ENCODE measurements at regions of chr5 and their contacts with region 1.

Region 1: DNA sequence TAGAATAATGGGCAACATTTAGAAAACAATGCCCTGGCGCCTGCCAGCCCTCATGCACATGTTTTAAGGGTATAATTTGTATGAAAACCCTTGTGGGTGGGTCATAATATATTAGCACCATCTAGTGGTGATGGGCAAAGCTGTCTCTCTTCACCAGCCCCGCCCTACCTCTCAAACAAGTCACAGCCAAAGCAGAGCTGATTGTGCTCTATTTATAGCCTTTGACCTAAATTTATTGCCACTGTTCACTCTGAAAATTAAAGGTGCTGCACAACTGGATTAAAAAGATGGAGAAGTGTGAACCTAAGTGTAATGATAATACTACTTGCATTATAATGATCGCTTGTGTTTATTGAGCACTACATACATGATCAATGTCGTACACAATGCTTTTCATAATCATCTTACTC is 131.9 kb upstream of the ANKH start:
- DNase-seq: peak; percentile 23 to 84
- ATAC-seq: peak; percentile 89 to 99 (median 98)
- H3K4me3 ChIP-seq: no peak overlapping the region
- H3K4me3 Mint-ChIP-seq: no peak overlapping the region
- H3K27ac ChIP-seq: no peak overlapping the region
- H3K27ac Mint-ChIP-seq: no peak overlapping the region
- H3K4me1 ChIP-seq: no peaks in the 10 kb centered on the region
- H3K4me1 Mint-ChIP-seq: peaks cover 0 to 2% of the 10 kb centered on the region in 2 donors
- H3K27me3 ChIP-seq: no peaks in the 10 kb centered on the region
- H3K27me3 Mint-ChIP-seq: peaks cover 29 to 49% of the 10 kb centered on the region in 2 donors
- CTCF ChIP-seq: peak; percentile 84

Region 2: GRCh38 chr5:14364576-14365472 is 638.7 kb before region 1 on chr5:
- intact Hi-C with region 1: loop called (anchors 10 kb)
- DNase-seq: peak in 1 of 2 donors; percentile 38
- ATAC-seq: no peak
- H3K4me3 ChIP-seq: no peak overlapping the region
- H3K4me3 Mint-ChIP-seq: peak overlapping the region; percentile 69
- H3K27ac ChIP-seq: no peak overlapping the region
- H3K27ac Mint-ChIP-seq: peak overlapping the region; percentile 56 to 68
- H3K4me1 ChIP-seq: peaks cover 46% of the 10 kb centered on the region
- H3K4me1 Mint-ChIP-seq: peaks cover 40 to 48% of the 10 kb centered on the region in 2 donors
- H3K27me3 ChIP-seq: no peaks in the 10 kb centered on the region
- H3K27me3 Mint-ChIP-seq: no peaks in the 10 kb centered on the region
- CTCF ChIP-seq: no peak

Region 3: GRCh38 chr5:14685757-14686156 is 317.8 kb before region 1 on chr5:
- intact Hi-C with region 1: loop called (anchors 2 kb)
- DNase-seq: peak in 1 of 2 donors; percentile 76
- ATAC-seq: peak; percentile 57 to 78 (median 77)
- H3K4me3 ChIP-seq: no peak overlapping the region
- H3K4me3 Mint-ChIP-seq: peak overlapping the region; percentile 43
- H3K27ac ChIP-seq: no peak overlapping the region
- H3K27ac Mint-ChIP-seq: peak overlapping the region; percentile 69 to 74
- H3K4me1 ChIP-seq: peaks cover 4% of the 10 kb centered on the region
- H3K4me1 Mint-ChIP-seq: peaks cover 11 to 47% of the 10 kb centered on the region in 2 donors
- H3K27me3 ChIP-seq: no peaks in the 10 kb centered on the region
- H3K27me3 Mint-ChIP-seq: no peaks in the 10 kb centered on the region
- CTCF ChIP-seq: peak; percentile 64

Region 4: GRCh38 chr5:14727428-14727865 is 276.1 kb before region 1 on chr5:
- intact Hi-C with region 1: loop called (anchors 1 kb)
- DNase-seq: peak; percentile 69 to 87
- ATAC-seq: peak; percentile 70 to 86 (median 78)
- H3K4me3 ChIP-seq: no peak overlapping the region
- H3K4me3 Mint-ChIP-seq: no peak overlapping the region
- H3K27ac ChIP-seq: no peak overlapping the region
- H3K27ac Mint-ChIP-seq: no peak overlapping the region
- H3K4me1 ChIP-seq: peaks cover 2% of the 10 kb centered on the region
- H3K4me1 Mint-ChIP-seq: peaks cover 0 to 4% of the 10 kb centered on the region in 2 donors
- H3K27me3 ChIP-seq: no peaks in the 10 kb centered on the region
- H3K27me3 Mint-ChIP-seq: no peaks in the 10 kb centered on the region
- CTCF ChIP-seq: peak; percentile 96

Region 5: DNA sequence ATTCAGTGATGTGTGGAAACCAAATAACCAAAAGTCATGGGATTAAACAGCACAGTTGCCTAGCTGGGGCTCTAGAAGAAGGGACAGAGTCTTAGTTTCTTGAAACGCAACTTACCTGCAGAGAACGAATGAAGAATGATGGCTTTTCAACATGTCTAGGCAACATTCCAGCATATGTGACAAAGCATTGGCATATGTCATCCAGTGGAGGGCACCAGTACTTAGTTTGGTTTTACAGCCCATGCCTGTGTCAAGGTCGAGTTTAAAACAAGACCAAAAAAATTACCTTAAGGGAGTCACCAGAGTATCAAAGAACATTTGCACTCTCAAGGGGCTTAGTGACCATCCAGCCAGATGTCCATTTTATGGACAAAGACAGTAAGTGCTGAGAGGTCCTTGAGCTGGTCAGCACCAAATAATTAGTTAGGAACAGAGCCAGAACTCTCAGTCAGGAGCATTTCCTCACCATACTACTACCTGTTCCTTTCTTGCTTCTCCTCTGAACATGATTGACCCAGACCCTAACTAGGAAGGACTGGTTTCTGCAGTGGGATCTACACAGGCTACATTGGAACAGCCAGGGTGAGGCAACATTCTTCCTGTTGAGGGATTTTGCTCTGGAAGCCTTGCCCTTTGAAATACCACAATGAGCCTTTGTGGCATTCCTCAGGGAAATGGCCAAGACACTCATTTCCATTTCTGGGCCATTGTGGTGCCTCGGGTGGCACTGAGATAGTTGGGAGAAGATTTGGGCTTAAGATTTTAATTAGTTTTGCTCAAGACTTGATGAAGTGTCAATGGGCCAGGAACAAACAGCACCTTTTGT is 56.5 kb before region 1 on chr5:
- intact Hi-C with region 1: loop called (anchors 1 kb)
- DNase-seq: peak in 1 of 2 donors; percentile 80
- ATAC-seq: peak; percentile 74 to 88 (median 80)
- H3K4me3 ChIP-seq: no peak overlapping the region
- H3K4me3 Mint-ChIP-seq: no peak overlapping the region
- H3K27ac ChIP-seq: no peak overlapping the region
- H3K27ac Mint-ChIP-seq: no peak overlapping the region
- H3K4me1 ChIP-seq: no peaks in the 10 kb centered on the region
- H3K4me1 Mint-ChIP-seq: no peaks in the 10 kb centered on the region
- H3K27me3 ChIP-seq: peaks cover 4% of the 10 kb centered on the region
- H3K27me3 Mint-ChIP-seq: peaks cover 11 to 33% of the 10 kb centered on the region in 2 donors
- CTCF ChIP-seq: peak; percentile 47

Region 6: GRCh38 chr5:14956413-14957046 is 47.0 kb before region 1 on chr5:
- intact Hi-C with region 1: loop called (anchors 2 kb)
- DNase-seq: no peak
- ATAC-seq: no peak
- H3K4me3 ChIP-seq: no peak overlapping the region
- H3K4me3 Mint-ChIP-seq: no peak overlapping the region
- H3K27ac ChIP-seq: no peak overlapping the region
- H3K27ac Mint-ChIP-seq: no peak overlapping the region
- H3K4me1 ChIP-seq: no peaks in the 10 kb centered on the region
- H3K4me1 Mint-ChIP-seq: no peaks in the 10 kb centered on the region
- H3K27me3 ChIP-seq: no peaks in the 10 kb centered on the region
- H3K27me3 Mint-ChIP-seq: no peaks in the 10 kb centered on the region
- CTCF ChIP-seq: no peak

Region 7: DNA sequence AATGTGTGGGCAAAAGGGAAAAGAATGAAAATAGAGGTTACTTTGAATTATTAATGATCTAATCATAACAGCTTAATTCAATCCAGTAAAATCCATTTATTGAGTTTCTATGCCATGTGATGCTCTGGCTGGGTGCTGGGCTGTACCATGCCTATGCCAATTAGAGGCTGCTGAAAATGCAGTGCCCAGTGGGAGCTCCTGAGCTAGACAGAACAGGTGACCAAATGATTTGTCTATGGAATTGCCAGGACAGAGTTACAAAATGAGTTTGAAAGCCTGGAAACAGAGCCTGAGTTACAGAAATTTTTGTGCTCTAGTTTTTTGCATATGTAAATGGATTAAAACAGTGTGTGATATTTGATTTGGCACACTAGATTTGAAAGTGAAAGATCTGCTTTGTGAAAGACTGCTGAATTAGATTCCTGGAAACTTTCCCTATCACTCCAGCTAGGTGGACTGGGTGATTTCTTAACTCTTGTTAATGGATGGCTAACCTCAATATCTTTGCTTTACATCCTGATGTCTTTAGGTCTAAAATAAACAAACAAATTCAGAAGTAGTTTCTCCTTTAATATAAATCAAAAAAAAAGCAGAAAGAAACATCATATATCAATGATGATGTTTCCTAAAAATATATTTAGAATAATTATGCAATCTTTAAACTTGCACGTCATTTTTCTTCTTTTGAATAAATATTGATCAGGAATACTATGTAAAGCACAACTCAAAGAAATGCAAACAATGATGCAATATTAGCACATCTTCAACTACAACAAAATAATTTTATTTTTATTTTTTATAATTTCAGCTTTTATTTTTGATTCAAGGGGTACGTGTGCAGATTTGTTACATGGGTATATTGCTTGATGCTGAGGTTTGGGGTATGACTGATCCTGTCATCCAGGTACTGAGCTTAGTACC is 301.7 kb after region 1 on chr5:
- intact Hi-C with region 1: no loop called
- DNase-seq: no peak
- ATAC-seq: no peak
- H3K4me3 ChIP-seq: no peak overlapping the region
- H3K4me3 Mint-ChIP-seq: no peak overlapping the region
- H3K27ac ChIP-seq: no peak overlapping the region
- H3K27ac Mint-ChIP-seq: no peak overlapping the region
- H3K4me1 ChIP-seq: no peaks in the 10 kb centered on the region
- H3K4me1 Mint-ChIP-seq: no peaks in the 10 kb centered on the region
- H3K27me3 ChIP-seq: no peaks in the 10 kb centered on the region
- H3K27me3 Mint-ChIP-seq: no peaks in the 10 kb centered on the region
- CTCF ChIP-seq: no peak